Right cardiac atrium (tissue), 5 donors: ENCODE measurements at regions of chr11 and their contacts with region 1.

Region 1: GRCh38 chr11:129364143-129364654 is 11.4 kb upstream of the BARX2 start:
- DNase-seq: peak; percentile 84 to 87 (median 86)
- ATAC-seq: peak; percentile 96
- H3K4me3 ChIP-seq: no peak overlapping the region
- H3K27ac ChIP-seq: no peak overlapping the region
- H3K4me1 ChIP-seq: no peaks in the 10 kb centered on the region
- H3K27me3 ChIP-seq: no peaks in the 10 kb centered on the region

Region 2: GRCh38 chr11:128776424-128777284 is 587.5 kb before region 1 on chr11:
- intact Hi-C with region 1: no loop called
- DNase-seq: peak; percentile 77 to 92 (median 92)
- ATAC-seq: peak; percentile 77
- H3K4me3 ChIP-seq: no peak overlapping the region
- H3K27ac ChIP-seq: no peak overlapping the region
- H3K4me1 ChIP-seq: peaks cover 11% of the 10 kb centered on the region
- H3K27me3 ChIP-seq: no peaks in the 10 kb centered on the region

Region 3: GRCh38 chr11:129286813-129287212 is 77.4 kb before region 1 on chr11:
- intact Hi-C with region 1: no loop called
- DNase-seq: no peak
- ATAC-seq: no peak
- H3K4me3 ChIP-seq: no peak overlapping the region
- H3K27ac ChIP-seq: no peak overlapping the region
- H3K4me1 ChIP-seq: no peaks in the 10 kb centered on the region
- H3K27me3 ChIP-seq: no peaks in the 10 kb centered on the region

Region 4: DNA sequence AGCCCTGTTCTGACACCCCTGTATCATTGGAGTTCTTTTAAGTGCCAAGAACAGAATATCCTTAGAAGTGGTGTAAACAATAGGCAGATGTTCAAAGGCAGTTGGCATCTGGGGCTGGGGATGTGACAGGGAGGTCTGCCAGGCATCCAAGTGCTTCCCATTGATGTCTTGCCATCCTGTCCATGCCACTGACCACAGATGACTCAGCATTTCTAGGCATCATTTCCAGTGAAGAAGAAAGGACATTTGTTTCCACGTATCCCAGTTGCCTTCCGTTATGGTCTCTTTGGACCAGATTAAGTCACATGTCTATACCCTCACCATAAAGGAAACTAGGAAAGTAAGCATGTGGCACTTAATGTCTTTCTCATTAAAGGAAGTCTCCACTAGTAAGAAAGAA is 65.2 kb before region 1 on chr11:
- intact Hi-C with region 1: no loop called
- DNase-seq: no peak
- ATAC-seq: no peak
- H3K4me3 ChIP-seq: no peak overlapping the region
- H3K27ac ChIP-seq: no peak overlapping the region
- H3K4me1 ChIP-seq: no peaks in the 10 kb centered on the region
- H3K27me3 ChIP-seq: peaks cover 4% of the 10 kb centered on the region

Region 5: GRCh38 chr11:129743111-129743815 is 379.1 kb after region 1 on chr11:
- intact Hi-C with region 1: loop called in 1 of 4 experiments (anchors 10 kb)
- DNase-seq: peak in 2 of 3 donors; percentile 53 to 66
- ATAC-seq: peak; percentile 21 to 51
- H3K4me3 ChIP-seq: no peak overlapping the region
- H3K27ac ChIP-seq: no peak overlapping the region
- H3K4me1 ChIP-seq: no peaks in the 10 kb centered on the region
- H3K27me3 ChIP-seq: no peaks in the 10 kb centered on the region

Region 6: GRCh38 chr11:129750349-129751292 is 386.4 kb after region 1 on chr11:
- intact Hi-C with region 1: loop called in 2 of 4 experiments (anchors 5 to 10 kb)
- DNase-seq: peak; percentile 74 to 88 (median 84)
- ATAC-seq: peak; percentile 83 to 93
- H3K4me3 ChIP-seq: peak overlapping the region; percentile 24
- H3K27ac ChIP-seq: no peak overlapping the region
- H3K4me1 ChIP-seq: no peaks in the 10 kb centered on the region
- H3K27me3 ChIP-seq: no peaks in the 10 kb centered on the region